Tibial artery (tissue), 4 donors: ENCODE measurements at regions of chr12 and their contacts with region 1.

Region 1: DNA sequence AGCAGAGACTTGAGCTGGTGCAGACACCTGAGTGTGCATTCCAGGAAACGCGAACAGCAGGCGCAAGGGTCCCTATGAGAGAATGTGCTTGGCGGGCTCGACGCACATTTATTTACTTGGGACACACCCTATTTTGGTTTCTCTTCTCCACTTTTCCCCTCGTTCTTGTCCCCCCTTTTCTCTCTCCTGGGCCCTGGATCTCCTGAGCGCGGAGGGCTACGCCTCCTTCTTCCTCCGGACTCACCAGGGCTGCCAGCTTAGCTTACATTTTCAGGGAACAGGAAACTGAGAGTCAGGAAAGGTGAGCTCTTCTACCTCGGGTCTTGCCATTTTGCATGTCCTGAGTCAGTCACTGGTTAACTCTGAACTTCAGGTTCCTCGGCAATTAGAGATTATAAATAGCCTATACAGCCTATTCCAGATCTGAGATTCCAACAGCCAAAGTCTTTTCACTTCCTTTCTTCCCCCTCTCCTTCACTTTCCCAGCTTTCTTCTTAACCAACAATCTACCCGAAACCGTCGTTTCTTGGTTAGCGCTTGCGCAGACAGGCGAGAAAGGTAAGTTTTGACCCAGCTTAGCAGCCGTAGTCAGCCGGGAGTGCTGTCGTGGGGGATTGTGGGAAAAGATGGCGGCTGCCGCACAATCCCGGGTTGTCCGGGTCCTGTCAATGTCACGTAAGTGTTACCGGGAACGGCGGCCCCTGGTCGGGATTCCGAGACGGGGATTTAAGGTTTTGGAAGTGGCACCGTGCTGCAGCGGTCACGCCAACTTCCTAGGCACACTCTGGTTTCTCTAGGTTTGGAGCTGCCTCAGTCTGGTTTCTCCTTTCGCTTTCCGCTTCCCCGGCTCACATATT is at the starts of genes AKAP3 and NDUFA9:
- DNase-seq: peak; percentile 79 to 85
- H3K4me3 ChIP-seq: peak within 1 kb of the TSS; percentile 74 to 90
- H3K27ac ChIP-seq: peak within 1 kb of the TSS; percentile 82 to 90
- H3K4me1 ChIP-seq: peaks cover 0 to 18% (median 11%) of the 10 kb centered on the region in 4 donors
- H3K27me3 ChIP-seq: no peaks in the 10 kb centered on the region
- CTCF ChIP-seq: no peak

Region 2: GRCh38 chr12:4604684-4605193 is 44.0 kb before region 1 on chr12:
- intact Hi-C with region 1: loop called (anchors 5 kb)
- DNase-seq: peak; percentile 82 to 86
- H3K4me3 ChIP-seq: peak overlapping the region; percentile 73 to 79
- H3K27ac ChIP-seq: peak overlapping the region; percentile 71 to 76
- H3K4me1 ChIP-seq: peaks cover 0 to 20% (median 8%) of the 10 kb centered on the region in 4 donors
- H3K27me3 ChIP-seq: no peaks in the 10 kb centered on the region
- CTCF ChIP-seq: peak; percentile 89 to 98

Region 3: DNA sequence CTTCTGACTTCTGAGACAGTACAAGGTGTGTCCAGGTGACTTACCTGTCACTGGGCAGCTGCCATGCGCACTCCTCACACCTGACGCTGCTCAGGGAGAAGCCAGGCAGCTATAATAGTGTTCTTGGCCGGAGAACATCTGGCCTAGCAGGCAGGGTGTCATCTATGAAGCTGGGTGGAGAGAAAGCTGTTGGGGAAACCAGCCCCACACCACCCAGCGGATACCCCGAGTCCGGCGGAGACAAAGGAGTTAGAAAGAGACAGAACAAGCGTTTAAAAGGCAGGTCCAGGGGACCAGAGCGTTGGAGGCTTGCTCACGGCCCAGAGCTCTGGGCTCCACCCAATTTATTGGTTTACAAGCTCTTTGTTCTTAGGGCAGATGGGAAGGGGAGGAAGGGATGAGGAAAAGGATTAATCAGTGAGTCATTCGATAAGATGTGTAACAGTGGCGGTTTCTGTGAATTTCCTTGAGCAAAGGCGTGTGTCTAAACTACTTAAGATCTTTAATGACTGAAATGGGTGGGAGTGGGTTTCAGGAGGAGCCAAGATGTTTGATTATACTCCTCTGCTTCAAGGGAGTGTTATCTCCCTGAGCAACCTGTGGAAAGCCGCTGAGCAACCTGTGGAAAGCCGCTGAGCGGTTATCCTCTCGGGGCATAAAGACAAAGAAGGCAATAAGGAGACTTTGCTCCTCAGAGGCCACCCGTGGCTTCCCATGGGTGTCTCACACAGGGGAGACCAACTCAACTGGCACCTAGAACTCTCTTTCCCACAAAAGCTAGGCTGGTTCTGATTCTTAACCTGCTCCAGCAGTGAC is 71.3 kb after region 1 on chr12 and contains the start of gene GALNT8:
- intact Hi-C with region 1: no loop called
- DNase-seq: no peak
- H3K4me3 ChIP-seq: no peak within 1 kb of the TSS
- H3K27ac ChIP-seq: no peak within 1 kb of the TSS
- H3K4me1 ChIP-seq: no peaks in the 10 kb centered on the region
- H3K27me3 ChIP-seq: peaks cover 0 to 12% of the 10 kb centered on the region in 2 donors
- CTCF ChIP-seq: no peak